B cell (primary cell): ENCODE measurements at regions of chr14 and their contacts with region 1.

Region 1: DNA sequence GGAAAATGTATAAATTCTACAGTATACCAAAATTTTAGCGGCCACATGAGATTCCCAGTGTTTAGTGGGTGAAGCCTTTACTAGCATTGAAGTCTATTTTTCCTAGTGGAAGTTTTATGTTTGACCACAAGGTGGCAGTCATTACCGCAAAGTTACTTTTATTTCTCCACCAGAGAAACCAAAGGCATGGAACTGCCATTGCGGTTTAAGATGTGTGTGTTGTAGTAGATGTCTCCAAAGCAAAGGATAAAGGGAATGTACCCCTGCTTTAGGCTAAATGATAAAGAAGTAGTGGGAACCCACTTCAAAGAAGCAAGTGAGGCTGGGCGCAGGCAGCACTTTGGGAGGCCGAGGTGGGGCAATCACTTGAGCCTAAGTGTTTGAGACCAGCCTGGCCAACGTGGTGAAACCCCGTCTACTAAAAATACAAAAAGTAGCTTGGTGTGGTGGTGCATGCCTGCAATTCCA is 140.5 kb downstream of the PRKCH start:
- DNase-seq: peak; percentile 80
- ATAC-seq: peak; percentile 70
- H3K4me3 ChIP-seq: no peak overlapping the region
- H3K4me3 Mint-ChIP-seq: peak overlapping the region; percentile 21
- H3K27ac ChIP-seq: no peak overlapping the region
- H3K27ac Mint-ChIP-seq: peak overlapping the region; percentile 74
- H3K4me1 ChIP-seq: peaks cover 8 to 18% of the 10 kb centered on the region in 2 donors
- H3K4me1 Mint-ChIP-seq: peaks cover 30% of the 10 kb centered on the region
- H3K27me3 ChIP-seq: no peaks in the 10 kb centered on the region
- H3K27me3 Mint-ChIP-seq: no peaks in the 10 kb centered on the region
- CTCF ChIP-seq: peak; percentile 94

Region 2: DNA sequence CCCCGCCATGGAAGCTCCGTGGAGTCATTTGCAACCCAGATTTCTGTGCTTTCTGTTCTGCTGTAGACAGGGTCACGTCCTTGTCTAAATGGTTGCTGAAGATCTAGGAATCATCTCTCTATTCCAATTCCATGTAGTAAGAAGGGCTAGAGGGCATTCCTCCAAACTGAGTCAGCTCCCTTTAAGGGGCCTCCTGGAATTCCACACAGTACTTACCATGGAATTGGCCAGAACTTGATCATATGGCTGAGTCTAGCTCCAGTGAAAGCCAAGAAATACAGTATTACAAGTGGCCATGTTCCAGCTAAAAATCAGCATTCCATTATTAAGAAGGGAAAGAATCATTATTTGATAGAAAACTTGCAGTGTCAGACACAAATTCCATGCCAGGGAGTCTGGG is 31.4 kb after region 1 on chr14:
- CTCF ChIA-PET with region 1: no interaction called
- POLR2A ChIA-PET with region 1: no interaction called
- intact Hi-C with region 1: no loop called
- DNase-seq: no peak
- ATAC-seq: no peak
- H3K4me3 ChIP-seq: no peak overlapping the region
- H3K4me3 Mint-ChIP-seq: no peak overlapping the region
- H3K27ac ChIP-seq: no peak overlapping the region
- H3K27ac Mint-ChIP-seq: no peak overlapping the region
- H3K4me1 ChIP-seq: peaks cover 24 to 29% of the 10 kb centered on the region in 2 donors
- H3K4me1 Mint-ChIP-seq: peaks cover 25% of the 10 kb centered on the region
- H3K27me3 ChIP-seq: no peaks in the 10 kb centered on the region
- H3K27me3 Mint-ChIP-seq: no peaks in the 10 kb centered on the region
- CTCF ChIP-seq: no peak

Region 3: GRCh38 chr14:61761959-61762786 is 300.3 kb after region 1 on chr14 and contains the start of gene SNAPC1:
- CTCF ChIA-PET with region 1: interaction called, 10 read pairs
- POLR2A ChIA-PET with region 1: no interaction called
- intact Hi-C with region 1: no loop called
- DNase-seq: peak; percentile 99
- ATAC-seq: peak; percentile 98
- H3K4me3 ChIP-seq: peak within 1 kb of the TSS; percentile 93 to 95 (median 95)
- H3K4me3 Mint-ChIP-seq: peak within 1 kb of the TSS; percentile 95
- H3K27ac ChIP-seq: peak within 1 kb of the TSS; percentile 90 to 91
- H3K27ac Mint-ChIP-seq: peak within 1 kb of the TSS; percentile 99
- H3K4me1 ChIP-seq: peaks cover 19 to 22% of the 10 kb centered on the region in 2 donors
- H3K4me1 Mint-ChIP-seq: peaks cover 36% of the 10 kb centered on the region
- H3K27me3 ChIP-seq: no peaks in the 10 kb centered on the region
- H3K27me3 Mint-ChIP-seq: no peaks in the 10 kb centered on the region
- CTCF ChIP-seq: no peak
- total RNA-seq, gene SNAPC1: 6.6 and 7.1 TPM in 2 replicates